Kidney (tissue), 22 donors: ENCODE measurements at regions of chr2 and their contacts with region 1.

Region 1: DNA sequence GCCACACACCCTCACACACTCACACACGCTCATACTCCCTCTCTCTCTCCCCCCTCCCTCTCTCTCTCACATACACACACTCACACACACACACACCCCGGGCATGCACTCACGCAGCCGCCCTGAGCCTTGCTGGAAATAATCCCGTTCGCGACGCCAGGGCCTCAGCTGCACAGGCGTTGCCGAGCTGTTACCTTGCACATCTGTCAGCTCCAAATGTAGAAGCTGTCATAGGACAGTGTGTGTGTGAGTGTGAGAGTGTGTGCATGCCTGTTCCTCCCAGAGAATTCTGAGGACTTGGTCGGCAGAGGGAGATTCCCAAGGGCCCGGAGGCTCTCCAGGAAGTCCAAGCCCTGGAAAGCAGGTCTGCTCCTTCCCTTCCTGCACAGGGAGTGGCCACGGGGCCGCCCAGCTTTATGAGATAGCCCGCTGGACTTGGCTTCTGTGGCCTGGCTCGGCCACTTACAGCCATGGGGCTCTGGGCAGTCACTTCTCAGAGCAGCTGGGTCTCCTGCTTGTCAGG is 8.6 kb downstream of the SPR start:
- DNase-seq: peak in 3 of 5 donors; percentile 36 to 75 (median 53)
- H3K4me3 ChIP-seq: peak overlapping the region in 1 of 3 donors; percentile 22
- H3K27ac ChIP-seq: no peak overlapping the region
- H3K4me1 ChIP-seq: peaks cover 0 to 5% (median 0%) of the 10 kb centered on the region in 3 donors
- H3K27me3 ChIP-seq: peaks cover 6% of the 10 kb centered on the region
- CTCF ChIP-seq: no peak

Region 2: DNA sequence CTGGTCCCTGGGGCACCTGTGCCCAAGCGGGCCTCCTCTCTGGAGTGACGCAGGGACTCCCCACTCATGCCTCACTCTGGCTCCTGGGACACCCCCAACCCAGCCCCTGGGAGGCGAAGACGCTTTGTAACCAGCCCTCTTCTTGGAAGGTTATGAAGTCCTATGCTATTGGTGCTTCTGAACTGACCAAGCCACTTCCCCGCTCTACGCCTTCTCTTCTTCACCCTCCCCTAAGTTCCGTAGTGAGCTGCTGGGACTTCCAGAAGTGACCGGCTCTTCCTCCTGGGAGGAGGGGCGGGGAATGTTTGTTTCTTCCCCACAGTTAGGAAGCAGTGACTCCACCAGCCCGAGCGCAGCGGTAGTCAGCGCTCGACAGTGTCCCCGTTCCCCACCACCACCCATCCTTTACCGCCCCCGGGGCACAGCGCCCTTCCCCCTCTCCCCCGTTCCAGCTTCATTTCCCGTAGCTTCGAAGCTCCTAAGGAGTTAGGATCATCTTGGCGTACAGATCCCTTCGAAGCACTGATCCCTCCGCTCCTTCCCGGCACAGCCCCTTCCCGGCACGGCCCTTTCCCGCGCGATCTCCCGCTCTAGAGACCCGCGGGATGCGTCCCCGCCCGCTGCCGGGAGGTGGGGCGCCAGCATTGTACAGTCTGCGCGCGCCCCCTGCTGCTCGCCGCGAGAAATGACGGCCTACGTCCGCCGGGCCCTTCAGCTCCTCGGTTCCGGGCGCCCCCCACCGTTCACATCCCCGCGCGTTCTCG is 281.2 kb after region 1 on chr2:
- intact Hi-C with region 1: loop called (anchors 5 kb)
- DNase-seq: peak; percentile 92 to 97 (median 93)
- H3K4me3 ChIP-seq: peak overlapping the region; percentile 16 to 73 (median 47)
- H3K27ac ChIP-seq: peak overlapping the region; percentile 85 to 88
- H3K4me1 ChIP-seq: peaks cover 0 to 14% (median 7%) of the 10 kb centered on the region in 3 donors
- H3K27me3 ChIP-seq: peaks cover 21% of the 10 kb centered on the region
- CTCF ChIP-seq: peak; percentile 99

Region 3: DNA sequence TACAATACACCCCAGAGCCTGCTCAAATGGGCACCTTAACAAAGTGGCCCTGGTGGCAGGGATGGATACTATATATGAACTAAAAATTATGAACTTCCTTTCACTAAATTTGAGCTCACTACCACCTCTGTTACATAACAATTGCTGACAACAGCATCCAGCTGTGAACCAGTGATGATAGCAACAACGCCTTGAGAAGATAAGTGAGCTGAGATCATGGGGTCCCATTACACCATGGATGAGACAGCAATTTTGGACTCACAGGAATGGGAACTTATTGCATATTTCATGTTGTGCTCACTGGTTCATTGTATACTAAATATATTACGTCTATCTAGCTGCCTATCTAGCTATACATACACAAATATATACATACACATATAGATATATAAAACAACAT is 473.0 kb after region 1 on chr2:
- intact Hi-C with region 1: no loop called
- DNase-seq: no peak
- H3K4me3 ChIP-seq: no peak overlapping the region
- H3K27ac ChIP-seq: no peak overlapping the region
- H3K4me1 ChIP-seq: no peaks in the 10 kb centered on the region
- H3K27me3 ChIP-seq: no peaks in the 10 kb centered on the region
- CTCF ChIP-seq: no peak